ENCODE measurements at regions of chr2 and their contacts with region 1.

Region 1: DNA sequence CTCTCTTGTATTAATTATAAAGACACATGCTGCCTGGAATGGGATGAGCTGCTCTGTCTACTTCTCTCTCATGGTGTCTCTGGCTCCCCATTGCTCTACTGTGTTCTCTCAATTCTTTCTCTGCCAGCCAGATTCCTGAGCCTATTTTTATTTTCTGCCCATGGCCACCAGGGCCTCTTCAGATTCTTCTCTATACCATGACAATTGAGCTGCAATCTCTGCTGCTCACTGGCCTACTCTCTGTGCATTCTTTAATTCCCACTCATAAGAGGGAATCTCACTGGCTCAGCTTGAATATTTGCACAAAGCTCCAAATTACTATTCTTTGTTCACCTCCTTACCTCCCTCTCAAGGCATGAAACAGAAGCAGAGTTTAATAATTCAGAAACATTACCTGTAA is 161.4 kb upstream of the GULP1 start:
- DNase-seq: no peak

Region 2: GRCh38 chr2:188092734-188093133 is 37.6 kb before region 1 on chr2:
- intact Hi-C with region 1: loop called in 1 of 2 experiments (anchors 2 kb)
- DNase-seq: no peak

Measured in posterior vena cava (tissue), 2 donors.